Adrenal gland (tissue), 19 donors: ENCODE measurements at regions of chr2 and their contacts with region 1.

Region 1: GRCh38 chr2:47323009-47323821 is 79.7 kb upstream of the MSH2 start:
- DNase-seq: peak; percentile 70 to 90 (median 78)
- H3K4me3 ChIP-seq: no peak overlapping the region
- H3K27ac ChIP-seq: no peak overlapping the region
- H3K4me1 ChIP-seq: peaks cover 0 to 6% of the 10 kb centered on the region in 2 donors
- H3K27me3 ChIP-seq: no peaks in the 10 kb centered on the region
- CTCF ChIP-seq: peak; percentile 95 to 99 (median 99)
- POLR2A ChIP-seq: peak in 1 of 2 donors; percentile 12

Region 2: GRCh38 chr2:46923041-46923528 is 400.1 kb before region 1 on chr2:
- intact Hi-C with region 1: loop called in 1 of 2 experiments (anchors 10 kb)
- DNase-seq: no peak
- H3K4me3 ChIP-seq: no peak overlapping the region
- H3K27ac ChIP-seq: no peak overlapping the region
- H3K4me1 ChIP-seq: no peaks in the 10 kb centered on the region
- H3K27me3 ChIP-seq: no peaks in the 10 kb centered on the region
- CTCF ChIP-seq: no peak
- POLR2A ChIP-seq: no peak

Region 3: GRCh38 chr2:46989491-46990230 is 333.6 kb before region 1 on chr2:
- intact Hi-C with region 1: loop called in 1 of 2 experiments (anchors 5 kb)
- DNase-seq: peak in 1 of 7 donors; percentile 21
- H3K4me3 ChIP-seq: no peak overlapping the region
- H3K27ac ChIP-seq: peak overlapping the region; percentile 49 to 91 (median 76)
- H3K4me1 ChIP-seq: peaks cover 56 to 59% of the 10 kb centered on the region in 2 donors
- H3K27me3 ChIP-seq: no peaks in the 10 kb centered on the region
- CTCF ChIP-seq: peak in 1 of 6 experiments; percentile 6
- POLR2A ChIP-seq: no peak